A549 (cell line): ENCODE measurements at regions of chr19 and their contacts with region 1.

Region 1: GRCh38 chr19:32570081-32570785 is 10.8 kb upstream of the PDCD5 start:
- DNase-seq: peak; percentile 70 to 85
- ATAC-seq: peak; percentile 98
- H3K4me3 ChIP-seq: no peak overlapping the region
- H3K27ac ChIP-seq: no peak overlapping the region
- H3K4me1 ChIP-seq: peaks cover 4% of the 10 kb centered on the region; the same call in 2 of the 3 replicates
- CTCF ChIP-seq: peak; percentile 99
- EP300 ChIP-seq: no peak
- POLR2A ChIP-seq: no peak
- RAD21 ChIP-seq: peak; percentile 99 to 100

Region 2: GRCh38 chr19:32224371-32225244 is 345.6 kb before region 1 on chr19:
- CTCF ChIA-PET with region 1: interaction called, 15 read pairs
- POLR2A ChIA-PET with region 1: no interaction called
- DNase-seq: peak; percentile 71 to 91
- ATAC-seq: peak; percentile 82 to 96
- H3K4me3 ChIP-seq: no peak overlapping the region
- H3K27ac ChIP-seq: no peak overlapping the region
- H3K4me1 ChIP-seq: no peaks in the 10 kb centered on the region
- CTCF ChIP-seq: peak; percentile 100
- EP300 ChIP-seq: no peak
- POLR2A ChIP-seq: no peak
- RAD21 ChIP-seq: peak; percentile 94 to 100

Region 3: GRCh38 chr19:32339988-32340874 is 230.0 kb before region 1 on chr19:
- CTCF ChIA-PET with region 1: interaction called, 182 read pairs
- POLR2A ChIA-PET with region 1: interaction called, 4 read pairs
- DNase-seq: peak; percentile 77 to 87
- ATAC-seq: peak; percentile 89 to 93
- H3K4me3 ChIP-seq: no peak overlapping the region
- H3K27ac ChIP-seq: peak overlapping the region in 1 of 2 experiments; percentile 33; a peak in 1 of 6 replicates
- H3K4me1 ChIP-seq: peaks cover 9% of the 10 kb centered on the region; the same call in 1 of the 3 replicates
- CTCF ChIP-seq: peak; percentile 90
- EP300 ChIP-seq: no peak
- POLR2A ChIP-seq: no peak
- RAD21 ChIP-seq: peak; percentile 79 to 82

Region 4: GRCh38 chr19:32442650-32443049 is 127.6 kb before region 1 on chr19:
- CTCF ChIA-PET with region 1: interaction called, 14 read pairs
- POLR2A ChIA-PET with region 1: no interaction called
- DNase-seq: no peak
- ATAC-seq: 0 out of 6 replicates have a peak, but pooled peaks of 1 of the 2 experiments have one; percentile 34
- H3K4me3 ChIP-seq: no peak overlapping the region
- H3K27ac ChIP-seq: no peak overlapping the region
- H3K4me1 ChIP-seq: no peaks in the 10 kb centered on the region
- CTCF ChIP-seq: no peak
- EP300 ChIP-seq: no peak
- POLR2A ChIP-seq: no peak
- RAD21 ChIP-seq: no peak

Region 5: DNA sequence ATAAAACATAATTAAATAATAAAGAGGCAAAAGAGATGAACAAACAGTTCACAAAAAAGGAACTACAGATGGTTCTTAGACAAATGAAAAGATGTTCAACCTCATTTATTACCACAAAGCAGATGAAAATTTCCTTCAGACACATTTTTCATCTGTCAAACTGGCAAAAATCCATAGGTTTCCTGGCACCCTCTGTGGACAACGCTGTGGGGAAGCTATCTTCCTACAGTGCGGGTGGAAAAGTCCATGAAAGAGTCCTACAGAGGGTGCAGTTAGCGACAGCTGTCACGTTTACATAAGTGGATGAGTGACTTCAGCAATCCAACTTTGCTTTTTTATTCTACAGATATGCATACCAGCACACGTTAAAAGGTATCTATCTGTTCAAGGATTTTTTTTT is 19.6 kb before region 1 on chr19:
- CTCF ChIA-PET with region 1: interaction called, 70 read pairs
- POLR2A ChIA-PET with region 1: no interaction called
- DNase-seq: no peak
- ATAC-seq: peak in 1 of 2 experiments; percentile 20; a peak in 1 of 6 replicates
- H3K4me3 ChIP-seq: no peak overlapping the region
- H3K27ac ChIP-seq: no peak overlapping the region
- H3K4me1 ChIP-seq: no peaks in the 10 kb centered on the region
- CTCF ChIP-seq: no peak
- EP300 ChIP-seq: no peak
- POLR2A ChIP-seq: no peak
- RAD21 ChIP-seq: no peak

Region 6: DNA sequence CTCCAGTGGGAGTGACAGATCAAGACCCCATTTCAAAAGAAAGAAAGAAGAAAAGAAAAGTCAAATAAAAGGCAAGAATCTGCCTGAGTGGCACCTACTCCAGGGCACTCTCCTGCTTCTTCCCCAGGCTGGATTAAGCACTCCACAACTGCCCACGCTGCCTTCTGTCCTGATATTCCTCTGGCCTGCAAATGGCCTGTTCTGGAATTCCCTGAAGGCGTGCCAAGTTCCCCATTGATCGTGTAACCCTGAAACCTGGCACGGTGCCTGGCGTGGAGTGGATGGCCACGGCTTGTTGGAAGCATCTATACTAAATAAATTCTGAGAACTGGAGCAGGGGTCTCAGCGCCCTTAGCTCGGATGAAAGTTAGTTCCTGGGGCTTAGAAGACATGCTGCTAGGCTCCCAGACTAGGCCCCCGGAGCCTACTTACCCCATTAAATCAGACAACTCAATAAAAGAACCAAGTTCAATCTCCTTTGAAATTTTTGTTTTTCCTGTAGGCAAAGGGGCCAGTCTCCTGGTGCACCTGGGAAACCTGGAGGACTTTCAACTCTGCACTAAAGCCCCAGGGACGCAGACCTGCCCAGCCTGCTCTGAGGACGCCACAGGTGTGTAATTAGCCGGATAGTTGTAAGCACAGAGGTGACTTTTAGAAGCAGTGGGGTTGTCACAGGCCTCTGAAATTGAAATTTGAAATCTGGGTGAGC is 82.8 kb after region 1 on chr19:
- CTCF ChIA-PET with region 1: no interaction called
- POLR2A ChIA-PET with region 1: no interaction called
- DNase-seq: no peak
- ATAC-seq: no peak
- H3K4me3 ChIP-seq: no peak overlapping the region
- H3K27ac ChIP-seq: no peak overlapping the region
- H3K4me1 ChIP-seq: no peaks in the 10 kb centered on the region
- CTCF ChIP-seq: no peak
- EP300 ChIP-seq: no peak
- POLR2A ChIP-seq: no peak
- RAD21 ChIP-seq: no peak